ENCODE measurements at regions of chr5 and their contacts with region 1.

Region 1: GRCh38 chr5:65481635-65482295 is at the start of gene ADAMTS6:
- DNase-seq: peak; percentile 91
- H3K4me3 Mint-ChIP-seq: no peak within 1 kb of the TSS
- H3K27ac Mint-ChIP-seq: peak within 1 kb of the TSS; percentile 85
- H3K4me1 Mint-ChIP-seq: peaks cover 18% of the 10 kb centered on the region
- H3K27me3 Mint-ChIP-seq: peaks cover 6% of the 10 kb centered on the region
- total RNA-seq, gene ADAMTS6: 0.73 and 0.89 TPM in 2 replicates

Region 2: GRCh38 chr5:64768358-64769312 is 713.1 kb before region 1 on chr5 and contains the starts of genes CWC27 and SREK1IP1:
- intact Hi-C with region 1: loop called (anchors 5 kb)
- DNase-seq: peak; percentile 95
- H3K4me3 Mint-ChIP-seq: peak within 1 kb of the TSS; percentile 97
- H3K27ac Mint-ChIP-seq: peak within 1 kb of the TSS; percentile 94
- H3K4me1 Mint-ChIP-seq: peaks cover 43% of the 10 kb centered on the region
- H3K27me3 Mint-ChIP-seq: no peaks in the 10 kb centered on the region
- total RNA-seq, gene CWC27: 31.8 and 32.4 TPM in 2 replicates
- total RNA-seq, gene SREK1IP1: 31.1 and 34.8 TPM in 2 replicates

Region 3: GRCh38 chr5:64958757-64959391 is 522.9 kb before region 1 on chr5:
- intact Hi-C with region 1: loop called (anchors 1 kb)
- DNase-seq: no peak
- H3K4me3 Mint-ChIP-seq: no peak overlapping the region
- H3K27ac Mint-ChIP-seq: no peak overlapping the region
- H3K4me1 Mint-ChIP-seq: no peaks in the 10 kb centered on the region
- H3K27me3 Mint-ChIP-seq: no peaks in the 10 kb centered on the region

Region 4: GRCh38 chr5:65102828-65103711 is 378.7 kb before region 1 on chr5:
- intact Hi-C with region 1: loop called (anchors 1 kb)
- DNase-seq: peak; percentile 80
- H3K4me3 Mint-ChIP-seq: peak overlapping the region; percentile 80
- H3K27ac Mint-ChIP-seq: peak overlapping the region; percentile 74
- H3K4me1 Mint-ChIP-seq: peaks cover 30% of the 10 kb centered on the region
- H3K27me3 Mint-ChIP-seq: peaks cover 13% of the 10 kb centered on the region

Region 5: GRCh38 chr5:65172486-65173129 is 309.2 kb before region 1 on chr5:
- intact Hi-C with region 1: no loop called
- DNase-seq: peak; percentile 58
- H3K4me3 Mint-ChIP-seq: no peak overlapping the region
- H3K27ac Mint-ChIP-seq: no peak overlapping the region
- H3K4me1 Mint-ChIP-seq: peaks cover 3% of the 10 kb centered on the region
- H3K27me3 Mint-ChIP-seq: peaks cover 9% of the 10 kb centered on the region

Region 6: GRCh38 chr5:65423623-65424022 is 58.1 kb before region 1 on chr5:
- intact Hi-C with region 1: no loop called
- DNase-seq: no peak
- H3K4me3 Mint-ChIP-seq: no peak overlapping the region
- H3K27ac Mint-ChIP-seq: no peak overlapping the region
- H3K4me1 Mint-ChIP-seq: no peaks in the 10 kb centered on the region
- H3K27me3 Mint-ChIP-seq: no peaks in the 10 kb centered on the region

Region 7: DNA sequence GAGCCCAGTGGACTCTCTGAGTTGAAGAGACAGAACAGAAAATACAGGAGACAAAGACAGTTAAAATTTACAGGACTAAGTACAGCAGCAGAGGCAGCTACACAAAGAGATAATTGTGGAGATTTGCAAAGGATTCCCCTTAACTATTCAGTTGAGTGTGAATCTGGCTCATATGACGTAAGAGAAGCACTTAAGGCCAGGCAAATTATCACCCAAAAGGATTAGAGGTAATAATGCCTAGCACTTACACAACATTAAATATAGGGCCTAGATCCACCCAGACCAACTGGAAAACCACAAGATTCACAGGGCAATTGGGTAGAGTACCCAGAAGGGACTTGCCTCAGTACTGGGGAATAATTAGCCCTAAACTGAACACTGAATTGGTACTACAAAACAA is 41.3 kb before region 1 on chr5:
- intact Hi-C with region 1: no loop called
- DNase-seq: no peak
- H3K4me3 Mint-ChIP-seq: no peak overlapping the region
- H3K27ac Mint-ChIP-seq: no peak overlapping the region
- H3K4me1 Mint-ChIP-seq: no peaks in the 10 kb centered on the region
- H3K27me3 Mint-ChIP-seq: no peaks in the 10 kb centered on the region

Region 8: DNA sequence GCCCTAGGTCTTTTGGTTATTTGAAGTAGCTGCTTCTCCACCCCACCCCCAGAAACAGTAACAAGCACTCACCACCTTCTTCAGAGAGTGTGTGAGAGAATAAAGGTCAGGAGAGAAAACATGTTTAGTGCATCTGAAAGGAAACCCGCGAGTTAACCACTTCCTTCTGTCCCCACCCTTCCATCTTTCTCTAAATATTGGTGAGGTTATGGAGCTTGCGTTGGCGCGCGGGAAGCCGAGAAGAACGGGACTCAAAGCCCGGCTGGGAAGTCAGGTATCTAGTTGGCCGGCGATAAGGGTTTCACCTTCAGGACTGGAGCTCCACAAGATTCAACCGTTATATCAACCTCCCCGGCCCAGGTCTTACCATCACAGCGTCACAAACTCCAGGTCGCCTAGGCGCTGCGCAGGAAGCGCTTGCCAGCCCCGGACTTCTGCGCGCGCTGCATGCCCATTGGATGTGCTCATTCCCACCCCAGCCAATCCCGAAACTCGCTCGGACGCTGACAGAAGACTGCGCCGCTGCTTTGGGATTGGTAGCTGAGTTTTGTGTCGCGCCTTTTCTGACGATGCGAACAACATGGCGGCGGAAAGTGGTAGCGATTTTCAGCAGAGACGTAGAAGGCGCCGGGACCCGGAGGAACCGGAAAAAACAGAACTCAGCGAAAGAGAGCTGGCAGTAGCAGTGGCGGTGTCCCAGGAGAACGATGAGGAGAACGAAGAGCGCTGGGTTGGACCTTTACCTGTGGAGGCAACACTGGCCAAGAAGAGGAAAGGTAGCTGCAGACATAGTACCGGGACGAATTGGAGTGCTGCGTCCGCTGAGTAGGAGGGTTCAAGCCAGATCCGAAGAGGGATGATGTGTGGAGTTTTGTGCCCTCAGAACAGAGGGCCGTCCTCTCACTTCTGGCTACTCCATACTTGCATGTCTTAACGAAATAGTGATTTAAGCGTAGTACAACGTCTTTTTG is 81.3 kb after region 1 on chr5 and contains the starts of genes CENPK and PPWD1:
- intact Hi-C with region 1: loop called (anchors 2 kb)
- DNase-seq: peak; percentile 98
- H3K4me3 Mint-ChIP-seq: peak within 1 kb of the TSS; percentile 91
- H3K27ac Mint-ChIP-seq: peak within 1 kb of the TSS; percentile 96
- H3K4me1 Mint-ChIP-seq: peaks cover 50% of the 10 kb centered on the region
- H3K27me3 Mint-ChIP-seq: no peaks in the 10 kb centered on the region
- total RNA-seq, gene CENPK: 87.8 and 88.8 TPM in 2 replicates
- total RNA-seq, gene PPWD1: 53.9 and 55.6 TPM in 2 replicates

Region 9: GRCh38 chr5:65624571-65625555 is 143.1 kb after region 1 on chr5 and contains the starts of genes SHLD3 and TRAPPC13:
- intact Hi-C with region 1: no loop called
- DNase-seq: peak; percentile 95
- H3K4me3 Mint-ChIP-seq: peak within 1 kb of the TSS; percentile 91
- H3K27ac Mint-ChIP-seq: peak within 1 kb of the TSS; percentile 99
- H3K4me1 Mint-ChIP-seq: peaks cover 28% of the 10 kb centered on the region
- H3K27me3 Mint-ChIP-seq: no peaks in the 10 kb centered on the region
- total RNA-seq, gene SHLD3: 4.7 and 5.1 TPM in 2 replicates
- total RNA-seq, gene TRAPPC13: 22.4 and 27.2 TPM in 2 replicates